ENCODE measurements at regions of chr17 and their contacts with region 1.

Region 1: DNA sequence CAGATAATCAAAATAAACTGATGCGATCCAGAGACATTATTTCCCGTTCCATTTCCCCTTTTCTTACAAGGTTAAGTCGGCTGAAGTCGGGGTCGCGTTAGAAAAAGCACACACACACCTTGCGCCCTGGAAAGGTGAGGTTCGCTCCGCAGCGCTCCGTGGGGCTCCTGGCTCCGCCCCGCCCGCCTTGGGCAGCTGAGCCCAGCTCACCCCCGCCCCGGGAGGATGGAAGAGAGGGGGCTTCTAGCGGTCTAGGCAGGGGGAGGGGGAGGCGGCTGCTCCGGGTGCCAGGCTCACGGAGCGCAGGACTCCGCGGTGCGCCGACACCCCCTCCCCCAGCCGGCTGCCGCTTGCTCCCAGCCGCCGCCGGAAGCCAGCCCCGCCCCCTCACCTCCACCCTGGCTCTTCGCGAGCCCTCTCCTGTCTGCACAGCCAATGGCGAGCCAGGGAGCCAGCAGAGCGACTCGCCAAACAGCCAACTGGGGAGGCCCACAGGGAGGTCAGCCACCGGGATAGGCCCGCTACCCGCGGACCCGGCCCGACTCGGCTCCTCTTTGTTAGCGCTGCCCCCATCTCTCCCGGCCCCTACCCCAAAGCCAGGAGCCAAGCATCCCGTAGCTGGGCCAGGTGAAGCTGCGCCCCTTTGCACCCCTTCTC is 30.4 kb downstream of the FAM222B start:
- DNase-seq: peak; percentile 65
- ATAC-seq: peak; percentile 98
- H3K4me3 ChIP-seq: peak overlapping the region; percentile 58 to 88
- H3K27ac ChIP-seq: peak overlapping the region; percentile 90
- H3K4me1 ChIP-seq: peaks cover 46% of the 10 kb centered on the region
- H3K27me3 ChIP-seq: no peaks in the 10 kb centered on the region
- CTCF ChIP-seq: no peak

Region 2: DNA sequence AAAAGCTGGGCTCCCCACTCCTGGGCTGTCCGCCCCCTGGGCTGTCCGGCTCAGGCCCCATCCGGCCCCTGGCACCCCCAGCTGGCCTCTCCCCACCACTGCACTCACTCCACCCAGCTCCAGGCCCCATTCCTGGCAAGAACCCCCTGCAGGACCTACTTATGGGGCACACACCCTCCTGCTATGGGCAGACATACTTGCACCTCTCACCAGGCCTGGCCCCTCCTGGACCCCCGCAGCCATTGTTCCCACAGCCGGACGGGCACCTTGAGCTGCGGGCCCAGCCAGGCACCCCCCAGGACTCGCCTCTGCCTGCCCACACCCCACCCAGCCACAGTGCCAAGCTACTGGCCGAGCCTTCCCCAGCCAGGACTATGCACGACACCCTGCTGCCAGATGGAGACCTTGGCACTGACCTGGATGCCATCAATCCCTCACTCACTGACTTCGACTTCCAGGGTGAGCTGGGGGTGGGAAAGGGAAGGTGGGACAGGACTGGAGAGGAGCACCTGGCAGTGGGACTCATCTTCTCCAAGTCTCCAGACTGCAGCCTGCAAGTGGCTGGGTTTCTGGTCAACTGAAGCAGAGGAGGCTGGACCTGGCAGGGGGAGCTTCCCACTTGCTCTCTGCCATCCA is 277.4 kb before region 1 on chr17:
- CTCF ChIA-PET with region 1: no interaction called
- POLR2A ChIA-PET with region 1: interaction called, 12 read pairs
- in situ Hi-C with region 1: no loop called
- intact Hi-C with region 1: no loop called
- DNase-seq: no peak
- ATAC-seq: no peak
- H3K4me3 ChIP-seq: no peak overlapping the region
- H3K27ac ChIP-seq: no peak overlapping the region
- H3K4me1 ChIP-seq: no peaks in the 10 kb centered on the region
- H3K27me3 ChIP-seq: no peaks in the 10 kb centered on the region; the same call in 1 of the 2 replicates
- CTCF ChIP-seq: no peak

Region 3: DNA sequence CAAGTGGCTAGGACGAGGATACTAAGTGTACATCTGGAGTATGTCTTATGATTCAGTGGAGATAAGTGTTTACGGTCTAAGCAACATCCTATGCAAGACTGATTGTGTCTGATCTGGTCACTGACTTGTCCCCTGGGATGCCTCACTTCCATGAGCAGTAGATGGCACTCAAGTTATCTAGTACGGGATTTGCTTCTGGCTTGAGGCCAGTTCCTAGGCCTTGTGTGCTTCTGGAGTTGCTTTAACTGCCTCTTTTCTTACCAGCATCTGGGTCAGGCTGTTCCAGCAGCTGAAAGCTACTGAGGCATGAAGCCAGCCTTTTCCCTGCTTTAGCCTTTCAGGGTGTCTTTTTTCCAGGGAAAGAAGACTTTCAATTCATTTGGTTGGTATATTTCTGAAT is 127.3 kb before region 1 on chr17:
- CTCF ChIA-PET with region 1: no interaction called
- POLR2A ChIA-PET with region 1: no interaction called
- in situ Hi-C with region 1: no loop called
- intact Hi-C with region 1: no loop called
- DNase-seq: no peak
- ATAC-seq: peak; percentile 36; the same call in 1 of the 2 replicates
- H3K4me3 ChIP-seq: no peak overlapping the region
- H3K27ac ChIP-seq: no peak overlapping the region
- H3K4me1 ChIP-seq: no peaks in the 10 kb centered on the region
- H3K27me3 ChIP-seq: no peaks in the 10 kb centered on the region
- CTCF ChIP-seq: no peak

Region 4: DNA sequence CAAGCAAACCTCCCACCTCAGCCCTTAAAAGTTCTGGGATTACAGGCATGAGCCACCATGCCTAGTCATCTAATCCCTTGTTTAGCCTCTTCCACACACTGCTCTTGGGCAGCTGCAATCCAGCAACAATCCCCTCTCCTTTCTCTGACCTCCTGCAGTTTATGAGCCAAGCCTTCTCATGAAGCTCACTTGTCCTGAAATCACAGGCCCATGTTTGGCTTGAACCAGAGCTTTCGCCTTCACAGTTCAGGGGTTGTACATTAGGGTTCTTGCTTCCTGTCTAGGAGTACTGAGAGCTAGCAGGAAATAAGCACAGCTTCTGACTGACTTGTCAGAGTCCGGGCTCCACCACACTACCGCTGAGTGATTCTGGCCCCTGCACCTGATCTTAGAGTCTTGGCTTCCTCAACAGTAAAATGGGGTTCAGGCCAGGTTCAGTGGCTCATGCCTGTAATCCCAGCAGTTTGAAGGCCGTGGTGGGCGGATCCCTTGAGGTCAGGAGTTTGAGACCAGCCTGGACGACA is 58.9 kb after region 1 on chr17:
- CTCF ChIA-PET with region 1: no interaction called
- POLR2A ChIA-PET with region 1: no interaction called
- in situ Hi-C with region 1: no loop called
- intact Hi-C with region 1: no loop called
- DNase-seq: no peak
- ATAC-seq: no peak
- H3K4me3 ChIP-seq: no peak overlapping the region
- H3K27ac ChIP-seq: no peak overlapping the region
- H3K4me1 ChIP-seq: no peaks in the 10 kb centered on the region
- H3K27me3 ChIP-seq: no peaks in the 10 kb centered on the region
- CTCF ChIP-seq: no peak